A549 (cell line): ENCODE measurements at regions of chr10 and their contacts with region 1.

Region 1: DNA sequence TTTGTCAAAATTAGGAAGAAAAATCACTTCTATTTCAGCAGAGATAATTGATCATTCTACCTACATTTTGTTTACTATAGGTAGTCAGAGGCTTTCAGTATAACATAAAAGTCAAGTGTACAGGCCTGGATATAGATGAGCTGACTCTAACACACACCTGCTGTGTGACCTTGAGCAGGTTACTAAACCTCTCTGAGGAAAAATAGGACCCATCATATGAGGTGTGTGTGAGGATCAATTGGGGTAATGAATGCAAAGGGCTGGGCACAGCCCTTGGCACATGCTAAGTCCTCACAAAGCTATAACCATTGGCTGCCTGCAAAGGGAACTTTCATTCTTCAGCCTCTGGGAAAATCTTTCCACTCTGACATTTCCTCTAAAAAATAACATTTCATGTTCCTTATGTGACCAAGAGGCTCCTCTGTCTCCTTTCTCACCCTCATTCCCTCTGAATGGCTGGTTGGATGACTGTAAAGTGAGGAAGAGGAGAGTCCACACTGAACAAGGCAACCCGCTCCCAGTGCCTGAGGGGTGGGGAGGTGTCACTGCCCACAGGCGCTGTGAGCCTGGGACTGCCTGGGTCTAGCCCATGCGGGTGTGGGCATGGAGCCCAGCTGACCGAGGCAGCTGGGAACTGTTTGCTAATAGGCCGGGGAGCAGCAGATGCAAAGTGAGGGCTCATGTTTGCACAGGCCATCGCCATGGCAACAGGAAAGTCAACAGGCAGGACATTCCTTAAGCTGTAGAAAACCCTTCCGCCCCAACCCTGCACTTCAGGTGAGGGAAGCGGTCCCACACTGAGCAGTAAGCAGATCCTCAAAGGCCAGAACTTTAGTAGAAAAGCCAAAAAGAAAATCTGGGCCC is 36.8 kb downstream of the MYOF start:
- DNase-seq: peak; percentile 96 to 99
- ATAC-seq: peak; percentile 95 to 97
- H3K4me3 ChIP-seq: no peak overlapping the region
- H3K27ac ChIP-seq: peak overlapping the region; percentile 97 to 98
- H3K4me1 ChIP-seq: peaks cover 68% of the 10 kb centered on the region
- CTCF ChIP-seq: no peak
- EP300 ChIP-seq: peak in 1 of 2 experiments; percentile 36; a peak in 1 of 5 replicates
- POLR2A ChIP-seq: peak; percentile 36
- RAD21 ChIP-seq: peak; percentile 23 to 31; a peak in 3 of 5 replicates

Region 2: DNA sequence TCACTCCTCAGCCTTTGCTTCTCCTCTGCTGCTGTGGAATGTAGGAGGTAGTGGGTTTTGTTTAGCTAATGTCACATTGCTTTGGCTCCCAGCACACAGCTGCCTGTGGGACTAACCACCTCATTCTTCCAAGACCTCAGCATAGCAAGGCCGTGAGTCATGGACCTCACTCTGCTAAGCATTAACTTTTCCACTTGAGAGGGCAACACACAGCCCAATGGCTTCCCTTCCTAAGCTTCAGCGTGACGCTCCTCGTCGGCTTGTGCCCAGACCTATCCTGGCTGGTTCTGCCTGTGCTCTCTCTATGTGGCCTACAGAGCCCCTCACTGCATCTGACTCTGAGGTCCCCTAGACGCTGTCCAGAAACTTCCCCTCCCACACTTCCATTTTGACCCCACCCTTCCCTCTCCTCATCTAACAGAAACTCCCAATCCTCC is 13.5 kb after region 1 on chr10:
- CTCF ChIA-PET with region 1: interaction called, 21 read pairs
- POLR2A ChIA-PET with region 1: interaction called, 30 read pairs
- DNase-seq: peak; percentile 91 to 99
- ATAC-seq: peak; percentile 90 to 96
- H3K4me3 ChIP-seq: no peak overlapping the region
- H3K27ac ChIP-seq: peak overlapping the region; percentile 96 to 99
- H3K4me1 ChIP-seq: peaks cover 84% of the 10 kb centered on the region
- CTCF ChIP-seq: no peak
- EP300 ChIP-seq: peak; percentile 61 to 82; a peak in 2 of 5 replicates
- POLR2A ChIP-seq: no peak
- RAD21 ChIP-seq: peak; percentile 41 to 45

Region 3: DNA sequence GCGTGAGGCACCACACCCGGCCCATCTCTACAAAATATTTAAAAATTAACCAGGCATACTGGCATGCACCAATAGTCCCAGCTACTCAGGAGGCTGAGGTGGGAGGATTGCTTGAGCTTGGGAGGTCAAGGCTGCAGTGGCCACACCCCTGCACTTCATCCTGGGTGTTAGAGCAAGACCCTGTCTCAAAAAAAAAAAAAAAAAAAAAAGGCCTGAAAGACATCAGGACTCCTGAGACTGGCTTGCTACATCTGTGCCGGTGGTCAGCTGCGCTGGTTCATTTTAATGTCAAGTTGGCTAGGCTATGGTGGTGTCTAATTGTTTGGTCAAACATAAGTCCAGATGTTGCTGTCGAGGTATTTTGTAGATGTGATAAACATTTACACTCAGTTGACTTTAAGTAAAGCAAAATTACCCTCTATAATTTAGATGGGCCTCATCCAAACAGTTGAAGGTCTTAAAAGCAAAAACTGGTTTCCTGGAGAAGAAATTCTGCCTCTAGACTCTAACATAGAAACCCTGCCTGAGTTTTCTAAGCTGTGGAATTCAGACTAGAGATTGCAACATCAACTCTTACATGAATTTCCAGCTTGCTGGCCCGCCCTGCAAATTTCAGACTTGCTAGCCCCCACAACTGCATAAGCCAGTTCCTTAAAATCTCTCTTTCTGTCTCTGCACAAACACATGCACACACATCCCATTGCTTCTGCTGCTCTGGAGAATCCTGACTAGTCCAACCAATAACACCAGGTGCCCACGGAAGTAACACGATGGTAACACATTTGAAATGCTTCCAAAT is 18.5 kb after region 1 on chr10:
- CTCF ChIA-PET with region 1: interaction called, 21 read pairs
- POLR2A ChIA-PET with region 1: interaction called, 30 read pairs
- DNase-seq: peak in 1 of 2 experiments; percentile 70
- ATAC-seq: no peak
- H3K4me3 ChIP-seq: no peak overlapping the region
- H3K27ac ChIP-seq: peak overlapping the region; percentile 96 to 99
- H3K4me1 ChIP-seq: peaks cover 93% of the 10 kb centered on the region
- CTCF ChIP-seq: no peak
- EP300 ChIP-seq: no peak
- POLR2A ChIP-seq: no peak
- RAD21 ChIP-seq: no peak

Region 4: GRCh38 chr10:93471110-93471651 is 25.9 kb after region 1 on chr10:
- CTCF ChIA-PET with region 1: interaction called, 11 read pairs
- POLR2A ChIA-PET with region 1: interaction called, 11 read pairs
- DNase-seq: peak; percentile 88 to 96
- ATAC-seq: peak; percentile 59 to 60
- H3K4me3 ChIP-seq: no peak overlapping the region
- H3K27ac ChIP-seq: peak overlapping the region; percentile 92 to 93
- H3K4me1 ChIP-seq: peaks cover 91% of the 10 kb centered on the region
- CTCF ChIP-seq: no peak
- EP300 ChIP-seq: peak; percentile 84 to 92; a peak in 3 of 5 replicates
- POLR2A ChIP-seq: no peak
- RAD21 ChIP-seq: peak; percentile 19 to 52